ENCODE measurements at regions of chr6 and their contacts with region 1.

Region 1: GRCh38 chr6:117919775-117920729 is 13.0 kb downstream of the SLC35F1 start:
- DNase-seq: peak; percentile 74
- ATAC-seq: peak; percentile 97
- H3K4me3 Mint-ChIP-seq: no peak overlapping the region
- H3K27ac Mint-ChIP-seq: no peak overlapping the region
- H3K4me1 Mint-ChIP-seq: peaks cover 8% of the 10 kb centered on the region
- H3K27me3 Mint-ChIP-seq: peaks cover 5% of the 10 kb centered on the region
- CTCF ChIP-seq: no peak

Region 2: GRCh38 chr6:117781550-117781949 is 138.5 kb before region 1 on chr6:
- CTCF ChIA-PET with region 1: no interaction called
- POLR2A ChIA-PET with region 1: no interaction called
- DNase-seq: no peak
- ATAC-seq: no peak
- H3K4me3 Mint-ChIP-seq: no peak overlapping the region
- H3K27ac Mint-ChIP-seq: no peak overlapping the region
- H3K4me1 Mint-ChIP-seq: peaks cover 15% of the 10 kb centered on the region
- H3K27me3 Mint-ChIP-seq: no peaks in the 10 kb centered on the region
- CTCF ChIP-seq: no peak

Region 3: GRCh38 chr6:117840541-117840983 is 79.5 kb before region 1 on chr6:
- CTCF ChIA-PET with region 1: interaction called, 13 read pairs
- POLR2A ChIA-PET with region 1: no interaction called
- DNase-seq: no peak
- ATAC-seq: peak; percentile 64
- H3K4me3 Mint-ChIP-seq: no peak overlapping the region
- H3K27ac Mint-ChIP-seq: no peak overlapping the region
- H3K4me1 Mint-ChIP-seq: peaks cover 10% of the 10 kb centered on the region
- H3K27me3 Mint-ChIP-seq: no peaks in the 10 kb centered on the region; the same call in 1 of the 2 replicates
- CTCF ChIP-seq: peak; percentile 55

Region 4: GRCh38 chr6:117951783-117952182 is 31.7 kb after region 1 on chr6:
- CTCF ChIA-PET with region 1: interaction called, 10 read pairs
- POLR2A ChIA-PET with region 1: no interaction called
- DNase-seq: peak; percentile 53
- ATAC-seq: peak; percentile 98
- H3K4me3 Mint-ChIP-seq: no peak overlapping the region
- H3K27ac Mint-ChIP-seq: peak overlapping the region; percentile 91
- H3K4me1 Mint-ChIP-seq: peaks cover 17% of the 10 kb centered on the region
- H3K27me3 Mint-ChIP-seq: no peaks in the 10 kb centered on the region
- CTCF ChIP-seq: no peak